ENCODE measurements at regions of chr5 and their contacts with region 1.

Region 1: GRCh38 chr5:148383564-148384379 is at the start of gene FBXO38:
- DNase-seq: peak; percentile 98
- H3K4me3 Mint-ChIP-seq: peak within 1 kb of the TSS; percentile 86
- H3K27ac Mint-ChIP-seq: peak within 1 kb of the TSS; percentile 92
- H3K4me1 Mint-ChIP-seq: peaks cover 53% of the 10 kb centered on the region
- H3K27me3 Mint-ChIP-seq: no peaks in the 10 kb centered on the region
- total RNA-seq, gene FBXO38: 43.1 to 45.0 TPM

Region 2: DNA sequence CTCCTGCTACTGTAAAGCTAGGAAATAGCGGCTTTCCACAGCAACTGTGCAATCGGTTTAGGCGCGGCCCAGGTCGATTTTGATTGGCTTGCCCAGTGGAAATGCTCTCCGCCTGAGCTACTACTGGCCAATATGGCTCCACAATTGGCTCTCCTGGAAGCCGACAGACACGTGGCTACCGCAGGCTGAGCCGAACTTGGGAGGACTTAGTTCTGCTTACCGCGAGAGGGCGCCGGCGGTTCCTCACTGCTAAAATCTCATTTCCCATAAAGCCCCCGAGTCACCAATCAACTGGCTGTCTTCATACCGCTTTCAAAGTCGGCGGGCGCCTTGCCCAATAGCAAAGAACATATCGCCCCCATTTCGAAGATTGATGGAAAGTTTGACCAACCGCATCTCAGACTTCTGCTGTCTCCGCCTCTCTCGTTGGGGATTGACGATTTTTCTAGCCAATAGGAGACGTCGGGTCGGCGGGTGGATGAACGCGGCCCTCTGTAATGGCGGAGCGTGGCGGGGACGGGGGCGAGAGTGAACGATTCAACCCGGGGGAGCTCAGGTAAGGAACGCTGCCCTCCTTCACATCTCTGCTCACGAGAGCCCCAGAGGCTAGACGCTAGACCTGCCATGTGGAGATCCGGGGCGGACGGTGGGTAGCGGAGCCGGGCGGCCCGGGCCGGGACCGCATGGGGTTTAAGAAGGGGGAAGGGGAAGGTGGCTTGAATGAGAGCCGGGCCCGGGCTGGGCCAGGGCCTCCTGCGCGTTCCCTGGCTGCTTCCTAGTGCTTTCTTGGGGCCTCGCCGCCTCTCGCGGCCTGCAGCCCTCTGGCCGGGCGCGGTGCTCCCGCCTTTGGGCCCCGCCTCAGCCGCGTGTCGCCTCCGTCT is 1936.7 kb before region 1 on chr5 and contains the start of gene TCERG1:
- CTCF ChIA-PET with region 1: no interaction called
- POLR2A ChIA-PET with region 1: no interaction called
- intact Hi-C with region 1: loop called (anchors 5 kb)
- DNase-seq: peak; percentile 99
- H3K4me3 Mint-ChIP-seq: peak within 1 kb of the TSS; percentile 97
- H3K27ac Mint-ChIP-seq: peak within 1 kb of the TSS; percentile 98
- H3K4me1 Mint-ChIP-seq: peaks cover 37% of the 10 kb centered on the region
- H3K27me3 Mint-ChIP-seq: no peaks in the 10 kb centered on the region
- total RNA-seq, gene TCERG1: 93.3 to 99.4 TPM

Region 3: GRCh38 chr5:148186248-148186996 is 197.3 kb before region 1 on chr5:
- CTCF ChIA-PET with region 1: no interaction called
- POLR2A ChIA-PET with region 1: no interaction called
- intact Hi-C with region 1: loop called (anchors 1 kb)
- DNase-seq: no peak
- H3K4me3 Mint-ChIP-seq: no peak overlapping the region
- H3K27ac Mint-ChIP-seq: no peak overlapping the region
- H3K4me1 Mint-ChIP-seq: peaks cover 9% of the 10 kb centered on the region
- H3K27me3 Mint-ChIP-seq: peaks cover 8% of the 10 kb centered on the region

Region 4: GRCh38 chr5:148457183-148457620 is 73.4 kb after region 1 on chr5:
- CTCF ChIA-PET with region 1: no interaction called
- POLR2A ChIA-PET with region 1: no interaction called
- intact Hi-C with region 1: no loop called
- DNase-seq: no peak
- H3K4me3 Mint-ChIP-seq: no peak overlapping the region
- H3K27ac Mint-ChIP-seq: no peak overlapping the region
- H3K4me1 Mint-ChIP-seq: no peaks in the 10 kb centered on the region
- H3K27me3 Mint-ChIP-seq: peaks cover 22% of the 10 kb centered on the region

Region 5: DNA sequence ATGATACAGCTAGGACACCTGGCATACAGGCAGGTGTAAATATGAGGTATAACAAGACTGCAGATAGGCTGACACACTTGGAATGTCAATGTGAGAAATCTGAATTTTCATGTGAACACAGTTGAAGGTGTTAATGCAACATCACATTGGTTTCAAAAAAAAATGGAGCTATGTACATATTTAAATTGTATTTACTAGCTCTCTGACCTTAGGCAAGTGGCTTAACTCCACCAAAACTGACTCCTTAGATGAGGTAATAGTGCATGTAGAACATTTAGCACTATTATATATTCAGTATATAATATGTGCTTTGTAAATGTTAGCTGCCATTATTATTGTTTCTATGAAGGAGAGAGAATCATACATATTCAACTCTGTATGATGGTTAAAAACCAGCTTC is 222.5 kb after region 1 on chr5:
- CTCF ChIA-PET with region 1: no interaction called
- POLR2A ChIA-PET with region 1: no interaction called
- intact Hi-C with region 1: no loop called
- DNase-seq: no peak
- H3K4me3 Mint-ChIP-seq: no peak overlapping the region
- H3K27ac Mint-ChIP-seq: no peak overlapping the region
- H3K4me1 Mint-ChIP-seq: no peaks in the 10 kb centered on the region
- H3K27me3 Mint-ChIP-seq: peaks cover 4% of the 10 kb centered on the region

Region 6: DNA sequence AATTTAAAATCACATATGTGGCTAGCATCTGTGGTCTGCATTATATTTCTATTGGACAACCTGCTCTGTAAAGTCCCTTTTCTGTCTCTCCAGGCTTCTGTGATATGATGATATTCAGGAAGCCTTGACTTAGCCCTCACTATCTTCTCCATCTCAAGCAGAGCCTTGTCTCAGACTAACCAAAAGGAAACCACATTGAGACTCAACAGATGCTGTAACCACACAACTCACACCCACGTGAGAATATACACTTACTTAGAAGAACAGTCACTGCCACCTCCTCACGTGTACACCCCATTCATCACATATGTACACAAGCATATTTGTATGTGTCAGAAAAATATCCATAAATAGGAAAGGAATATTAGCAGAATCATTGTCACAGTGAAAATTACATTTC is 236.9 kb after region 1 on chr5:
- CTCF ChIA-PET with region 1: no interaction called
- POLR2A ChIA-PET with region 1: no interaction called
- intact Hi-C with region 1: loop called (anchors 5 kb)
- DNase-seq: peak; percentile 19
- H3K4me3 Mint-ChIP-seq: no peak overlapping the region
- H3K27ac Mint-ChIP-seq: no peak overlapping the region
- H3K4me1 Mint-ChIP-seq: peaks cover 22% of the 10 kb centered on the region
- H3K27me3 Mint-ChIP-seq: peaks cover 8% of the 10 kb centered on the region

Region 7: DNA sequence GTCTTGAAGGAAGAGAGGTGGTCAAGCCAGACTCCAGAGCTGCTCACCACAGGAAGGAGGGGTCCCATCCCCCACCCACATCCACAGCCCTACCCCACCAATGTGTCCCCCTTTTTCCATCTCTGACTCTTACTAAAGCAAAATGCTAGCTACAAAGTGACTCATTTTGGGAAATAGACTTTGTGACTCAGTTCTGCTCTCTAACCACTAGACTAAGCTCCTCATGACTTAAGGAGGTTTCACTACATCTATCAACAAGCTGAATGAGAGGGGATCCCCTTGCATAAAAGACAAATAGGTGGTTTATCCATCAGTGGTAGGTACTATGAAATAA is 407.5 kb after region 1 on chr5:
- CTCF ChIA-PET with region 1: no interaction called
- POLR2A ChIA-PET with region 1: no interaction called
- intact Hi-C with region 1: loop called (anchors 2 kb)
- DNase-seq: peak; percentile 77
- H3K4me3 Mint-ChIP-seq: no peak overlapping the region
- H3K27ac Mint-ChIP-seq: no peak overlapping the region
- H3K4me1 Mint-ChIP-seq: peaks cover 24% of the 10 kb centered on the region
- H3K27me3 Mint-ChIP-seq: peaks cover 33% of the 10 kb centered on the region

Region 8: GRCh38 chr5:149357370-149358293 is 973.9 kb after region 1 on chr5 and contains the start of gene PCYOX1L:
- CTCF ChIA-PET with region 1: no interaction called
- POLR2A ChIA-PET with region 1: no interaction called
- intact Hi-C with region 1: loop called (anchors 2 kb)
- DNase-seq: peak; percentile 95
- H3K4me3 Mint-ChIP-seq: peak within 1 kb of the TSS; percentile 90
- H3K27ac Mint-ChIP-seq: peak within 1 kb of the TSS; percentile 89
- H3K4me1 Mint-ChIP-seq: peaks cover 64% of the 10 kb centered on the region
- H3K27me3 Mint-ChIP-seq: no peaks in the 10 kb centered on the region
- total RNA-seq, gene PCYOX1L: 21.8 to 24.0 TPM

Region 9: GRCh38 chr5:150320048-150320555 is 1936.3 kb after region 1 on chr5:
- CTCF ChIA-PET with region 1: no interaction called
- POLR2A ChIA-PET with region 1: no interaction called
- intact Hi-C with region 1: no loop called
- DNase-seq: no peak
- H3K4me3 Mint-ChIP-seq: no peak overlapping the region
- H3K27ac Mint-ChIP-seq: no peak overlapping the region
- H3K4me1 Mint-ChIP-seq: peaks cover 4% of the 10 kb centered on the region
- H3K27me3 Mint-ChIP-seq: no peaks in the 10 kb centered on the region